ENCODE measurements at regions of chr10 and their contacts with region 1.

Region 1: DNA sequence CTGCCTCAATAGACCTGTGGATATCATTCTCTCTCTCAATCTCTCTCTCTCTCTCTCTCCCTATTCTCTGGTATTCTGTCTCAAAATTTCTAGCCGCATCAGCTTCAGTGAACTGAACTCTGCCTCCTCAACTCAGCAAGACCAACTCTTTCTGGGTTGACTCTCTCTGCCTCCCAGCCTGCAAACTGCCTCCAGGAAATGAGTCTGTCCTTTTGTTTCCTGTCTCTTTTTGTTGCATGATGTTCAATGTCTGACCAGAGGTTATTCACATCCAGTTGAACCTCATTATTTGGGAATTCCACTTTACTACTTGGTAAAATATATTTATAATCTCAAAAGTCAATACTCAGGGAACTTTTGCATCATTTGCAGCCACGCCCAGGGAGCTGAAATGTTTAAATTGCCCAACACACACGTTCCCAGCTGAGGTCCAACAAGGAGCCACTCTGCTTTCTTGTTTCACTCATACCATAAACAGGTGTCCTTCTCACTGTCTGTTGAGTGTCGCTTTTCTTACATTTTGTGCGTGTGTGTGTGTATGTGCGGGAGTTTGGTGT is 682.8 kb upstream of the FZD8 start:
- DNase-seq: no peak
- H3K4me3 ChIP-seq: no peak overlapping the region
- H3K27ac ChIP-seq: no peak overlapping the region
- H3K4me1 ChIP-seq: no peaks in the 10 kb centered on the region
- H3K27me3 ChIP-seq: no peaks in the 10 kb centered on the region
- CTCF ChIP-seq: no peak

Region 2: GRCh38 chr10:36448760-36449681 is 124.1 kb after region 1 on chr10:
- CTCF ChIA-PET with region 1: no interaction called
- POLR2A ChIA-PET with region 1: interaction called, 10 read pairs
- intact Hi-C with region 1: no loop called
- DNase-seq: no peak
- H3K4me3 ChIP-seq: no peak overlapping the region
- H3K27ac ChIP-seq: no peak overlapping the region
- H3K4me1 ChIP-seq: no peaks in the 10 kb centered on the region
- H3K27me3 ChIP-seq: no peaks in the 10 kb centered on the region
- CTCF ChIP-seq: no peak

Region 3: GRCh38 chr10:36462194-36462593 is 137.3 kb after region 1 on chr10:
- CTCF ChIA-PET with region 1: no interaction called
- POLR2A ChIA-PET with region 1: no interaction called
- intact Hi-C with region 1: no loop called
- DNase-seq: no peak
- H3K4me3 ChIP-seq: no peak overlapping the region
- H3K27ac ChIP-seq: no peak overlapping the region
- H3K4me1 ChIP-seq: no peaks in the 10 kb centered on the region
- H3K27me3 ChIP-seq: no peaks in the 10 kb centered on the region
- CTCF ChIP-seq: no peak

Region 4: DNA sequence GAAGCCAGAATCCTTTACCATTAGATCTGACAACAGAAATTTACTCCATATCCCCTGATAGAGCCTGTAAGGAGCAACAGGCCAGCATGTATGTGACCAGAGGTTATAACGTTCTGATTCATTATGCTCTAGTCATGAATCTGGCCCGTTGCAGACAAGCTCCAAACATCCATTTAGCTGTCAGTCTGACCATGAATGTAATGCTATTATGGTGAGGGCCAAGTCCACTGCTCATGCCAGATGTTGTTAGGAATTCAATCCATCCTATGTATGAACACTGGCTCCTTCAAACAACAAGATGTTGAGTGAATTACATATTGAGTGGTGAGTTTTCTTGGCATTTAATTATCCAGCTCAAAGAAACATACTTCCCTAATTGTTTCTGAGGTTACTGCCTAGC is 190.4 kb after region 1 on chr10:
- CTCF ChIA-PET with region 1: no interaction called
- POLR2A ChIA-PET with region 1: no interaction called
- intact Hi-C with region 1: no loop called
- DNase-seq: no peak
- H3K4me3 ChIP-seq: no peak overlapping the region
- H3K27ac ChIP-seq: no peak overlapping the region
- H3K4me1 ChIP-seq: no peaks in the 10 kb centered on the region
- H3K27me3 ChIP-seq: no peaks in the 10 kb centered on the region
- CTCF ChIP-seq: no peak

Region 5: GRCh38 chr10:37301271-37301670 is 976.4 kb after region 1 on chr10:
- CTCF ChIA-PET with region 1: no interaction called
- POLR2A ChIA-PET with region 1: no interaction called
- intact Hi-C with region 1: no loop called
- DNase-seq: no peak
- H3K4me3 ChIP-seq: no peak overlapping the region
- H3K27ac ChIP-seq: no peak overlapping the region
- H3K4me1 ChIP-seq: no peaks in the 10 kb centered on the region
- H3K27me3 ChIP-seq: no peaks in the 10 kb centered on the region
- CTCF ChIP-seq: no peak